ENCODE measurements at regions of chr2 and their contacts with region 1.

Region 1: GRCh38 chr2:88458633-88459032 is 6.1 kb upstream of the FOXI3 start:
- DNase-seq: no peak
- H3K4me3 ChIP-seq: no peak overlapping the region
- H3K4me3 Mint-ChIP-seq: no peak overlapping the region
- H3K27ac Mint-ChIP-seq: no peak overlapping the region
- H3K4me1 ChIP-seq: peaks cover 11% of the 10 kb centered on the region; the same call in 1 of the 2 replicates
- H3K4me1 Mint-ChIP-seq: peaks cover 8% of the 10 kb centered on the region
- H3K27me3 ChIP-seq: no peaks in the 10 kb centered on the region
- H3K27me3 Mint-ChIP-seq: peaks cover 9% of the 10 kb centered on the region
- CTCF ChIP-seq: no peak

Region 2: DNA sequence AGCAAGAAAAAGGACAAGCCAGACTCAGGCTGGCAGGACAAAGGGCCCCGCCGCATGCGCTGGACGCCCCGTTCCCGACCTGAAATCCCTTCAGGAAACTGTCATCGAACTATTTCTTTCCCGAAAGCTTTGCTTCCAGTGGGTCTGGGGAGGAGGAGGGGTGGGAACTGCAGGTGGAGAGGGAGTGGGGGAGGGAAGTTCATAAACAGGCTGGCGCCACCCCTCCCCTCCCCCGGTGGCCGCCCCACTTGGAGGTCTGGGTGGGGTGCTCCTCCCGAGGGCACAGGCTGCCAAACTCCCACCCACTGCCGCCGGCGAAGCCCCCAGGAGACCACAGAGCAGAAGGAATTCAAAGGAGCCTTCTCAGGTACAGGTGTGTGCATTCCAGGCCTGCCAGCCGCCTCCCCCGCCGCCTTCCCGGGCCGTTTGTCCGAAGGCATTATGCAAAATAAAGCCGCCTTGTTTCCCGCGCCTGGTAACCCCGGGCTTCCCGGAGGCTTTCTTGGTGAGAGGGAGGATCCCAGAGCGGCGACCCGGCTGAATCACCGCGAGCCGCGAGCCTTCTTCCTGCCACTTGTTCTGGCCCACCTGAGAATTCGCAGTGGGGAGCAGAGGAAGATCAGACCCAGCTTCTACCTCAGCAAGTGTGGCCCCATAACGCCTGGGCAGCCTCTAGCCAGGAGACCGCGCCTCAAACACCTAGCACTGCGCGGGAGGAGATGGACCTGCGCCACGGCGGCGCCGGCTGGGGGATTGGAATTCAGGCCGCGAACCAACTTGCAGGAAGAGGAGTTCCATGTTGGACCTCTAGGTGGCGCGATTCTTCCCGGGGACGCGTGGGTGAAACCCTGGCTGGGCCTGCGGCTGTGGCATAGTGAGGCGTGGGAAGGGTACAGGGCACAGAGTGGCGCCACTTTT is 108.0 kb before region 1 on chr2:
- CTCF ChIA-PET with region 1: interaction called, 3 read pairs
- POLR2A ChIA-PET with region 1: no interaction called
- intact Hi-C with region 1: loop called (anchors 5 kb)
- DNase-seq: peak; percentile 76 to 80
- H3K4me3 ChIP-seq: peak overlapping the region; percentile 33
- H3K4me3 Mint-ChIP-seq: peak overlapping the region; percentile 70
- H3K27ac Mint-ChIP-seq: peak overlapping the region; percentile 46
- H3K4me1 ChIP-seq: peaks cover 4% of the 10 kb centered on the region; the same call in 1 of the 2 replicates
- H3K4me1 Mint-ChIP-seq: no peaks in the 10 kb centered on the region
- H3K27me3 ChIP-seq: no peaks in the 10 kb centered on the region; the same call in none of the 2 replicates
- H3K27me3 Mint-ChIP-seq: peaks cover 4% of the 10 kb centered on the region
- CTCF ChIP-seq: peak; percentile 72 to 93

Region 3: DNA sequence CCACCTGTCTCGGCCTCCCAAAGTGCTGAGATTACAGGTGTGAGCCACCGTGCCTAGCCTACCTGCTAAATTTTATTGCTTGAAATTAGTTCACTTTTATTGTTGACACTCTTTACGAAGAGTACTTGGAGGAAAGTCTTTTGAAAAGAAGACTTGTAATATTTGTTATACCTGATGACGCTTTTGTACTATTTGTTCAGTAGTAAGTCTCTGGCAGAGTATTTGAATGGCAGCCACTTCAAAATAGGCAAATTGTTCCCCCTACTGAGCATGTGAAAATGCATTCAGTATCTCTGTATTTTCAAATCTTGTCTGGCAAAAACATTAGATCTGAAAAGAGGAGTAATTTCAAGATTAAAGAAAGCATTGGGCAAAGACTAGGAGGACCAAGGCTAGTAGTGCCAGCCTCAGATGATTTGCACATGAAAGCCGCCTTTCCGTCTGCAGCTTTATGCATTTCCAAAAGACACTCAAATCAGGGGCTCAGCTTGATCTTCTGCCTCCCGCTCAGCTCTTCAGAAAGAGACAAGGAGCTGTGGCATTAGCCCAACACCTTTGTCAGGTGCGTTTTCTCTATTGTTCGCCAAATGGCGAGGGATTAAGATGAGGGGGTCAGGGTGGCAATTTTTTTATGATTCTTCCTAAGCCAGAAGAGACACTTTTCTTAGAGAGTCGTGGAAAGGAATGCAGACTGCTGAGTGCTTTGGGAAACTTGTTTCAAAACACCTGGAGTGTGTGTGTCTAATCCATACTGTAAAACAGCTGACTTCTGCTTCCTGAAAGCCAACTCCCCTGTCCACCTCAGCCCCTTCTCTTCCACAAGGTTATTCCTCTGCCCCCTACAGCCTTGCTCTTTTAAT is 12.7 kb after region 1 on chr2:
- CTCF ChIA-PET with region 1: no interaction called
- POLR2A ChIA-PET with region 1: no interaction called
- intact Hi-C with region 1: no loop called
- DNase-seq: no peak
- H3K4me3 ChIP-seq: no peak overlapping the region
- H3K4me3 Mint-ChIP-seq: no peak overlapping the region
- H3K27ac Mint-ChIP-seq: no peak overlapping the region
- H3K4me1 ChIP-seq: no peaks in the 10 kb centered on the region
- H3K4me1 Mint-ChIP-seq: no peaks in the 10 kb centered on the region
- H3K27me3 ChIP-seq: no peaks in the 10 kb centered on the region
- H3K27me3 Mint-ChIP-seq: peaks cover 8% of the 10 kb centered on the region
- CTCF ChIP-seq: no peak

Measured in Caco-2 (cell line).